ENCODE measurements at regions of chr16 and their contacts with region 1.

Region 1: DNA sequence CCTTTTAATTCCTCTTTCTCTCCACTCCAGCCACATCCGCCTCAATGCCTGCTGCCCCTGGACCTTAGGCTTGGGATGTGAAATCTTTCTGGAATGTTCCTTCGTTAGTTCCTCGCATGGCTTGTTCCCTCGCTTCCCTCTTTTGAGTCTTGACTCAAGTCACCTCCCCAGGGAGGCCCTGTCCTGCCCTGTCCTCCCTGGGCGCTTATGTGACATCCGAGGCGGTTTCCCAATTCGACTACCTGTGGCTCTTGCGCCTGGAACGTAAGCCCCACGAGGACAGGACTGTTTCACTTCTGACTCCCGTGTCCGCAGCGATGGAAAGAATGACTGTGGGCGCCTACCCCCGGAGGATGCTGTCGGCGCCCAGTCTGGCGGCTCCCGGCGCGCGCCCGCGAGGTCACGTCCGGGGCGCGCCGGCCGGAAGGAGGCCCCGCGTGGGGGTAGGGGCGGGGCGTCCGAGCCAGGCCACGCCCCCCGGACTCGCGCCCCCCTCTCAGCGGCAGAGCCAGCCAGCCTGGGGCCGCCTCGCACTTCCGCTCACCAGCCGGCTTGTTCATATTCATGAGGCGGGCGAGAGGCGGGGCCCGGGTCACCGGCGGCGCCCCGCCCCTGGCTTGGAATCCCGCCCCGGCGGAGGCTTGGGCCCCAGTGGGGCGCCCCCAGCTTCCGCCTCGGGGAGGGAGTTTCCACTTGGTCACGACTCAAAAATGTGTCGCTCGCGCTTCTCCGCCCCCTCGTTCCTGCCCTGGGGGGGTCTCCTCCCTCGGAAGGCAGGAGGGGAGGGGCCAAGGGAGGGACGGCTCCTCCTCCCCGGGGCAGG is 8.4 kb upstream of the GLIS2 start:
- DNase-seq: peak; percentile 99
- H3K4me3 Mint-ChIP-seq: peak overlapping the region; percentile 98
- H3K27ac Mint-ChIP-seq: peak overlapping the region; percentile 98
- H3K4me1 Mint-ChIP-seq: peaks cover 26% of the 10 kb centered on the region
- H3K27me3 Mint-ChIP-seq: peaks cover 2% of the 10 kb centered on the region

Region 2: DNA sequence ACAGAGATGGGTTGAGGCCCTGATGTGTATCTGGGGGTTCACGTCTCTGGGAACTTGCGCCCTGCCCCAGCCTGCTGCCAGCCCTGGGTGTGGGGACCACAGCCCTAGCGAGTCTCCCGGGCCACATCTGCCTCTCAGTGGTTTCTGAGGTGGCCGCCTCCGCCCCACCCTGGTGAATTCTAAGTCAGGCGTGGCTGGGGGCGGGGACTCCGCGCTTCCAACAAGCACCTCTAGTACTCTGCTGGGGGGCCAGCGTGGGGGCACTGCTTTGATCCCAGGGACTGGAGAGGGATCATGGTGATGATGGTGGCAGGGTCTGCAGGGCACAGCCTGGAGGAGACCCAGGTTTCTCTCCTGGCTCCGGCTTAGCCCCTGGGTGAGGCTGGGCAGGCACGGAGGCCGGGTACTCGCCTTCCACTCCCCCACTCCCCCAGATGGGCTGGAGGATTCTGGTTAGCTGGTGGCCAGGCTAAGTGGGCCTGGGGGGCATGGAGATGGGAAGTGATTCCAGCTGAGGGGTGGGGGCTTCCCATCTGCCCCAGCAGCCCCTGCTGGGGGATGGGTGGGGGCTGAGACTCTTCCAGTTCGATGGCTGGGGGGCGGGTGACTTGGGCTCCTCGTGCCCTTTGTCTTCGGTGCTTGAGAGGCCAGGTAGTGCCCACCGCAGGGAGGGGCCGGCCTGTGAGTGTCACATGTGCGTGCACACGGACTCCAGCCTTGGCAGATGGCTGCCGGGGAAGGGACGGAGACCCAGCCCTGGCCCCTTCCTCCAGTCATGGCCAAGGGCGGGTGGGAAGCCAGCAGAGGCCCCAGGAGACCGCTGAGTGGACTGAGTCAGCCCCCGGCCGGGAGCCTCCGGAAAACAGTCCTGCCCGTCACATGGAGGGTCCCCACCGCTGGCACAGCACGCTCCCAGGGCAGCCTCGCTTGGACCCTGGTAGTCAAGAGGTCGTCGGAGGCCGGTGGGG is 12.3 kb after region 1 on chr16:
- intact Hi-C with region 1: no loop called
- DNase-seq: peak; percentile 88
- H3K4me3 Mint-ChIP-seq: no peak overlapping the region
- H3K27ac Mint-ChIP-seq: no peak overlapping the region
- H3K4me1 Mint-ChIP-seq: peaks cover 11% of the 10 kb centered on the region
- H3K27me3 Mint-ChIP-seq: peaks cover 4% of the 10 kb centered on the region

Region 3: DNA sequence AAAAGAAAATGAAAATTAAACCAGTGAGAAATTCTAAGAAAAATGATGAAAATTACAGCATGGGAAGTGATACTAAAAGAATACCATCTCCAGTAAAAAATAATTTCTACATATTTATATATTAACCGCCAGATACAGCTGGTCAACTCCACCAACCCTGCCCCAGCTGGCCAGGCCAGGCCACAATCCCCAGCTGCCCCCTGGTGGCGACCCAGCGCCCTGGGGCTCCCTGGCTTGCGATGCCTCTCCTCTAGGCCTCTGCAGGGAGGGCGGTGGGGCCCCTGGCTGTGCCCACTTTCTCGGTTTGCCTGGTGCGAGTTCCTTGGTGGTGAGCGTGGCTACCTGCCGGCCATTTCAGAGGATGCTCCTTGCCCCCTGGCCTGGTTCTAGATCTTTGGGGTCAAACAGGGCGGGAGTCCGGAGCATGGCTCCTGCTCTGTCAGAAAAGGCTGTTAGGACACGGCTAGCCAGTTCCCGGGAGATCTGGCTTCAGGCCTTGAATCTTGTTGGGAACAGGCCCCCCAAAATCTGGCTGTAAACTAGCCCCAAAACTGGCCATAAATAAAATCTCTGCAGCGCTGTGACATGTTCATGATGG is 22.9 kb after region 1 on chr16:
- intact Hi-C with region 1: loop called (anchors 2 kb)
- DNase-seq: peak; percentile 92
- H3K4me3 Mint-ChIP-seq: no peak overlapping the region
- H3K27ac Mint-ChIP-seq: no peak overlapping the region
- H3K4me1 Mint-ChIP-seq: no peaks in the 10 kb centered on the region
- H3K27me3 Mint-ChIP-seq: peaks cover 8% of the 10 kb centered on the region

Region 4: DNA sequence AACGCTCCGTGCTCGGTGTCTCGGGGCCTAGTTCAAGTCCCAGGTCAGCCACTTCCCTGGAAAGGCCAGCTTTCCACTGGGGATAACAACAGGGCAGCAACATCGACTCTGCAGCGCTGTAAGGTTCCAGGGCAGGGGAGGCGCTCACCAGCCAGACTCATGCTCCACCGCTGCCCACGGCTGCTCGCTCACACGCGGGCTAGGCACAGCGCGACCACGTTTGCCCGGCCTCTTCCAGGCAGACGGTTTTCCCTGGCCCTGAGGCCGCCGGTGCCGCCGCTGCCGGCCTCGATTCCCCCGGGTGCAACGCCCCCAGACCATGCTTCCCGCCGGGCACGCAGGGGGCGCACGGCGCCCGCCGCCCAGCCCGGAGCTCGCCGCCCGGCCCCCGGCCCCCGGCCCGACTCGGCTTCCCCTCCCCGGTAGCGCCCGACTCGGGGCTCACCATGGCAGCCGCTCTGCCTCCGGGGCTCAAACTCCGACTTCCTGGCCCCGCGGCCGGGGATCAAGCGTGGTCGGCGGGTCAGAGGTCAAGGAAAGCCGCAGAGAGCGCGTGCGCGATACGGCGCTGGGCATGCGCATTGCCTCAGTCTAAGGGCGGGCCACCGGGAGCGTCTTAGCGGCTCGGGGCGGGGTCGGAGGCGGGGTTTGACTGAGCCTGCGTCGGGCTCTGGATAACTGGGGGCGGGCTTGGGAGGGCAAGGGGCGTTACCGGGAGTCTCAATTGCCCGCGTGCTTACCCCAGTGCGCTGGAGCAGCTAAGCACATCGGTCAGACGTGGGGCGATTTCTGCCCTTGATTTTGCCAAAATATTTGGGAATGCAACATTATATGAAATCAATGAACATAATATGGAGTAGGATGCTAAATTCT is 43.6 kb after region 1 on chr16 and contains the start of gene PAM16:
- intact Hi-C with region 1: loop called (anchors 1 kb)
- DNase-seq: peak; percentile 100
- H3K4me3 Mint-ChIP-seq: peak within 1 kb of the TSS; percentile 96
- H3K27ac Mint-ChIP-seq: peak within 1 kb of the TSS; percentile 94
- H3K4me1 Mint-ChIP-seq: peaks cover 12% of the 10 kb centered on the region
- H3K27me3 Mint-ChIP-seq: no peaks in the 10 kb centered on the region
- total RNA-seq, gene PAM16: 93.5 and 104 TPM in 2 replicates

Measured in activated CD4-positive, alpha-beta T cell treated with anti-CD3 and anti-CD28 coated beads, Interleukin-2, amount 10 ng/mL, durations not matched to agents 24 days and 14 days (primary cell).